ENCODE measurements at regions of chr21 and their contacts with region 1.

Region 1: DNA sequence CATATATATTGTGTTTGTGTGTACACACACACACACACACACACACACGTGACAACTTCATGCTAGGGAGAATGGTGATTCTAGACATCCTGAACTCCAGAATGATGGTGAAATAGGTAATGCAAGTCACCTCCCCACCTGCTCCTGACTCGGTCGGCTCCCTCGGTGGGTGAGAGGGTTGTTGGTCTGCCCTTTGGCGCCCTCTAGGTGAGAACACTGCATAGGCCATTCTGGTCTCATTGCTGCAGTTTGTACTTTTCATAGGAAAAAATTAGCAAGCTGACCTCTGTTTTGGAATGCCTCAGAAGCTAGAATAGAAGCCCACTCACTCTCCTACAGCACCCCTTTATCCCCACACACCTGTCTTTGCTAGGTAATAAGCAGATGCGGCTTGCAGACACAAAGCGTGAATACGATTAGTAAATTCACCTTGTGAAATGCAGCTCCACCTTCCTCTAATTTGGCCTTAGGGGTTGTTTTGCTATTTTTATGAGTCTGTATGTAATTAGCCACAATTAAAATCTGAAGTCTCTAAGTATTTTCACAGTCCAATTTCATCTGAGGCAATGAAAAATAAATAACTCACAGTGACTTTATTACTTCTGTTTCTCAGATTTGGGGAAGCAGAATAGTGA is 130.0 kb upstream of the KCNJ15 start:
- DNase-seq: peak; percentile 73
- H3K4me3 Mint-ChIP-seq: no peak overlapping the region
- H3K27ac Mint-ChIP-seq: no peak overlapping the region
- H3K4me1 Mint-ChIP-seq: no peaks in the 10 kb centered on the region
- H3K27me3 Mint-ChIP-seq: peaks cover 61% of the 10 kb centered on the region
- CTCF ChIP-seq: peak; percentile 52

Region 2: DNA sequence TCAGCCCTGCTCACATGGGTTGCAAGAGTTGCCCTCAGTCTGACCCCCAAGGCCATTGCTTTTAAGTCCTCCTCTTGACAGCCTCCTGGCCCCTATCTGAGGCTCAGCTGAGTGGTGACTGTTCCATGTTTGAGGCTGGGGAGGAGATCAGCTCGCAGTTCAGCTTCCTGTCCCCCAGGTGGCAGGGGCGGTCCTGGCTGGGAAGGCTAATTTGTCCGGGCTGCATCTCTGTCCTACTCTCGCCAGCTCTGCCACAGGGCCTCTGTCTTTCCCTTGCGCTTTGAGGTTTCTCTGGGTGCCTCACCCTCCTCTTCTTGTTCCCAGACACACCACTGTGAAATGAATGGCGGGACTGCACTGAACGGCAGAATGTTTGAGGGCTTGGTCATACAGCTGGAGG is 367.8 kb before region 1 on chr21:
- CTCF ChIA-PET with region 1: interaction called, 10 read pairs
- intact Hi-C with region 1: loop called (anchors 1 kb)
- DNase-seq: peak; percentile 56
- H3K4me3 Mint-ChIP-seq: no peak overlapping the region
- H3K27ac Mint-ChIP-seq: no peak overlapping the region
- H3K4me1 Mint-ChIP-seq: peaks cover 8% of the 10 kb centered on the region
- H3K27me3 Mint-ChIP-seq: peaks cover 27% of the 10 kb centered on the region
- CTCF ChIP-seq: no peak

Region 3: DNA sequence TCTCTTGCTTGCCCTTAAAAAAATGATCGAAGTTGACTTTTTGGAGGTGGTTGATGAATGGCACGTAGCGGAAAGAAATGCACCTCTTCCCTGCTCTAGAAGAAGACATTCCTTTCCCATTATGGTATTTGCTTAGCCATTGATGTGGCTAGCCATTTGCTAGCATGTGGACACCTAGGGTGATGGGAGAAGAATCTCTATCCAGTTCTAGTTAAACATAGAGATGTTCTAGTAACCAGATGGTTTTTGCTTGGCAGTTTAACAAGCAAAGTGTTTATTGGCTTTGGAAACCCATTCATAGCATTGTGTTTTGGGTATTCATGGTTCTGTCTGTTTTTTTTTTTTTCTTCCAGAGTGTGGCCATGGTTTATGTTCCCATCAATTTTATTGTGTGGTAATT is 289.4 kb before region 1 on chr21:
- CTCF ChIA-PET with region 1: no interaction called
- intact Hi-C with region 1: no loop called
- DNase-seq: no peak
- H3K4me3 Mint-ChIP-seq: no peak overlapping the region
- H3K27ac Mint-ChIP-seq: no peak overlapping the region
- H3K4me1 Mint-ChIP-seq: no peaks in the 10 kb centered on the region
- H3K27me3 Mint-ChIP-seq: peaks cover 46% of the 10 kb centered on the region
- CTCF ChIP-seq: no peak

Measured in Calu3 (cell line).